Caco-2 (cell line): ENCODE measurements at regions of chr17 and their contacts with region 1.

Region 1: GRCh38 chr17:58517734-58518609 is 3.5 kb upstream of the MTMR4 start:
- DNase-seq: peak; percentile 100
- H3K4me3 ChIP-seq: peak overlapping the region; percentile 76
- H3K4me3 Mint-ChIP-seq: peak overlapping the region; percentile 96
- H3K27ac Mint-ChIP-seq: peak overlapping the region; percentile 95
- H3K4me1 ChIP-seq: 0 out of 2 replicates have a peak, but pooled peaks cover 13% of the 10 kb centered on the region
- H3K4me1 Mint-ChIP-seq: peaks cover 26% of the 10 kb centered on the region
- H3K27me3 ChIP-seq: no peaks in the 10 kb centered on the region
- H3K27me3 Mint-ChIP-seq: no peaks in the 10 kb centered on the region
- CTCF ChIP-seq: no peak

Region 2: GRCh38 chr17:58487589-58488427 is 30.2 kb before region 1 on chr17 and contains the start of gene HSF5:
- CTCF ChIA-PET with region 1: no interaction called
- POLR2A ChIA-PET with region 1: no interaction called
- intact Hi-C with region 1: loop called (anchors 1 kb)
- DNase-seq: no peak
- H3K4me3 ChIP-seq: no peak within 1 kb of the TSS
- H3K4me3 Mint-ChIP-seq: peak within 1 kb of the TSS; percentile 52
- H3K27ac Mint-ChIP-seq: peak within 1 kb of the TSS; percentile 76
- H3K4me1 ChIP-seq: peaks cover 67% of the 10 kb centered on the region
- H3K4me1 Mint-ChIP-seq: peaks cover 44% of the 10 kb centered on the region
- H3K27me3 ChIP-seq: no peaks in the 10 kb centered on the region
- H3K27me3 Mint-ChIP-seq: no peaks in the 10 kb centered on the region
- CTCF ChIP-seq: no peak
- total RNA-seq, gene HSF5: 0.98 and 1.1 TPM in 2 replicates

Region 3: DNA sequence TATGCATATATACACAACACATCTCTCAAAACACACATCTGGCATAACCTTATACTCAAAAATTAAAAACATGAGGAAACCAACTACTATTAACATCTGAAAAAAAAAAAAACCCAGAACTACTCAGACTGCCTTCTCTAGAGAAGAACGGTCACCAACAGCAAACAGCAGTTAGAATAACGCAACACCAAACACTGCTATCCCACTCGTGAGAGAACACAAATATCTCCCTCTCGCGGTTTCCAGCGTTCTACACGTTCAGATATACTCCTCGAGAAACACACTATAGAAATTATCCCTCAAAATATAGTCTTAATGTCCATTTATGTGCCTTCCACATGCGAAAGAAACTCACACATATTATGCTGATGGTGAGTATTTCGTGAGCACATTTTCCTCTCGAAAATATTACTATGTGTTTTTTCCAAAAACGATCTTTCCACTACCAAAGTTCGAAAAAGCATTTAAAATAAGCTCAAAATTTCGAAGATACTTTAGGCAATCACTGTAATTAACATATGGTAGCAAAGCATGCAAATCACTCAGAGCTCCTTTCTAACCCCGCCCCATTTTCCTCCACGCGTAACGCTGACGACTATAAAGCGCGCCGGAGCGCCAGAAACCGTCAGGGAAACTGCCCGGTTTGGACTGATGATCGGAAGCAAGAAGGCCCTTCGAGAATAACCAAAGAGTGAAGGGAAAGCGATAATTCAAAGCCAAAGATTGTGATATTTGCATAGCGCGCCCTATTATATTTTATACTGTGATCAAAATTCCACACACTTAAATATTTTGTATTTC is 113.8 kb after region 1 on chr17:
- CTCF ChIA-PET with region 1: interaction called, 6 read pairs
- POLR2A ChIA-PET with region 1: interaction called, 41 read pairs
- intact Hi-C with region 1: loop called (anchors 1 kb)
- DNase-seq: peak; percentile 97 to 98
- H3K4me3 ChIP-seq: peak overlapping the region; percentile 33
- H3K4me3 Mint-ChIP-seq: no peak overlapping the region
- H3K27ac Mint-ChIP-seq: no peak overlapping the region
- H3K4me1 ChIP-seq: peaks cover 7% of the 10 kb centered on the region; the same call in 1 of the 2 replicates
- H3K4me1 Mint-ChIP-seq: no peaks in the 10 kb centered on the region
- H3K27me3 ChIP-seq: no peaks in the 10 kb centered on the region
- H3K27me3 Mint-ChIP-seq: peaks cover 3% of the 10 kb centered on the region
- CTCF ChIP-seq: peak; percentile 2 to 21

Region 4: DNA sequence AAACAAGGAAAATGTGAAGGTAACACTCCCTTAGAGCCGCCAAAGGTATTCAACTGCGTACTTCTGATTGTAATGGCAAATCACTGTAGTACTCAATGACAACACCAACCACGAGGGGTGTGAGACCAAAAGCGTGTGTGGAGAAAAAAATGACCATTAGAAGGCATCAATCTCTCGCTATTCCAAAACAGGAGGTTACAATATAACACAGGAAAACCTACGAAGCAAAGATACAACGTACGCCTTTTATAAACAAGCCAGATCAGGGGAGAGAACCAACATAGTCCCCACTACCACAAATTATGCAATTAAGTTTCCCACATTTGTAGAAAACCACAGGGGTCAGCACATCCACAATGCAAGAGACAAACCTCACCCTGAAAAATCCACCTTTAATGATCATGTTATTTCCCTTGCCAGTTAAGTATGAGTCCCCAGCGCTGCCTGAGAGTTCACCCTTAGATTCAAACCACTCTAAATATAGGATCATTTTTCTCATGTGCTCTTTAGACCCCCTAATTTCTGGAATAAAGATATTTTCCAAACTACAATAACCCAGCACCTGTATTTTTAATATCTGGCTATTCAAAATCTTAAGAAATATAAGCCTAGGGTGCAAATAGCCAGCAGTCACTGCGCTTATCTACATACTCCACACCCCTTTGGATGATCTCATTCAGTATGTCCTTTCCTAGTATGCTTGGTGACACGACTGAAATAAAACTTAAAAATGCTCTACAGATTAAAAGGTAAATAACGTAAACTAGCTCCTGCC is 161.5 kb after region 1 on chr17:
- CTCF ChIA-PET with region 1: no interaction called
- POLR2A ChIA-PET with region 1: no interaction called
- intact Hi-C with region 1: loop called (anchors 1 kb)
- DNase-seq: peak; percentile 72 to 78
- H3K4me3 ChIP-seq: no peak overlapping the region
- H3K4me3 Mint-ChIP-seq: peak overlapping the region; percentile 49
- H3K27ac Mint-ChIP-seq: peak overlapping the region; percentile 97
- H3K4me1 ChIP-seq: peaks cover 4% of the 10 kb centered on the region; the same call in 1 of the 2 replicates
- H3K4me1 Mint-ChIP-seq: peaks cover 13% of the 10 kb centered on the region
- H3K27me3 ChIP-seq: no peaks in the 10 kb centered on the region
- H3K27me3 Mint-ChIP-seq: no peaks in the 10 kb centered on the region
- CTCF ChIP-seq: no peak

Region 5: GRCh38 chr17:59004338-59005111 is 486.6 kb after region 1 on chr17:
- CTCF ChIA-PET with region 1: interaction called, 7 read pairs
- POLR2A ChIA-PET with region 1: interaction called, 6 read pairs
- intact Hi-C with region 1: loop called (anchors 1 kb)
- DNase-seq: peak; percentile 50 to 74
- H3K4me3 ChIP-seq: no peak overlapping the region
- H3K4me3 Mint-ChIP-seq: no peak overlapping the region
- H3K27ac Mint-ChIP-seq: no peak overlapping the region
- H3K4me1 ChIP-seq: no peaks in the 10 kb centered on the region
- H3K4me1 Mint-ChIP-seq: no peaks in the 10 kb centered on the region
- H3K27me3 ChIP-seq: no peaks in the 10 kb centered on the region
- H3K27me3 Mint-ChIP-seq: no peaks in the 10 kb centered on the region
- CTCF ChIP-seq: peak; percentile 94

Region 6: GRCh38 chr17:59155439-59156182 is 637.6 kb after region 1 on chr17 and contains the start of gene PRR11:
- CTCF ChIA-PET with region 1: no interaction called
- POLR2A ChIA-PET with region 1: no interaction called
- intact Hi-C with region 1: loop called (anchors 2 kb)
- DNase-seq: peak; percentile 96 to 100
- H3K4me3 ChIP-seq: peak within 1 kb of the TSS; percentile 82
- H3K4me3 Mint-ChIP-seq: no peak within 1 kb of the TSS
- H3K27ac Mint-ChIP-seq: no peak within 1 kb of the TSS
- H3K4me1 ChIP-seq: peaks cover 20% of the 10 kb centered on the region
- H3K4me1 Mint-ChIP-seq: peaks cover 31% of the 10 kb centered on the region
- H3K27me3 ChIP-seq: no peaks in the 10 kb centered on the region
- H3K27me3 Mint-ChIP-seq: no peaks in the 10 kb centered on the region
- CTCF ChIP-seq: no peak
- total RNA-seq, gene PRR11: 80.2 and 89.9 TPM in 2 replicates